Lower leg skin (tissue), 4 donors: ENCODE measurements at regions of chr19 and their contacts with region 1.

Region 1: GRCh38 chr19:41570639-41571112 is 5.3 kb upstream of the CEACAM21 start:
- DNase-seq: peak; percentile 61 to 94
- H3K4me3 ChIP-seq: no peak overlapping the region
- CTCF ChIP-seq: peak in 1 of 3 donors; percentile 55
- POLR2A ChIP-seq: no peak

Region 2: GRCh38 chr19:41449865-41450178 is 120.9 kb before region 1 on chr19:
- intact Hi-C with region 1: loop called (anchors 5 kb)
- DNase-seq: peak in 1 of 2 donors; percentile 71
- H3K4me3 ChIP-seq: no peak overlapping the region
- CTCF ChIP-seq: no peak
- POLR2A ChIP-seq: no peak